MCF 10A (cell line): ENCODE measurements at regions of chr1 and their contacts with region 1.

Region 1: GRCh38 chr1:233025157-233025915 is 74.9 kb downstream of the NTPCR start:
- DNase-seq: peak; percentile 46
- H3K4me3 Mint-ChIP-seq: no peak overlapping the region
- H3K27ac Mint-ChIP-seq: no peak overlapping the region
- H3K4me1 Mint-ChIP-seq: no peaks in the 10 kb centered on the region
- H3K27me3 Mint-ChIP-seq: no peaks in the 10 kb centered on the region
- CTCF ChIP-seq: peak; percentile 27

Region 2: GRCh38 chr1:232940262-232940661 is 85.1 kb before region 1 on chr1:
- CTCF ChIA-PET with region 1: no interaction called
- POLR2A ChIA-PET with region 1: no interaction called
- intact Hi-C with region 1: no loop called
- DNase-seq: no peak
- H3K4me3 Mint-ChIP-seq: no peak overlapping the region
- H3K27ac Mint-ChIP-seq: no peak overlapping the region
- H3K4me1 Mint-ChIP-seq: peaks cover 12% of the 10 kb centered on the region
- H3K27me3 Mint-ChIP-seq: no peaks in the 10 kb centered on the region
- CTCF ChIP-seq: no peak

Region 3: GRCh38 chr1:233012021-233012420 is 13.3 kb before region 1 on chr1:
- CTCF ChIA-PET with region 1: interaction called, 14 read pairs
- POLR2A ChIA-PET with region 1: interaction called, 6 read pairs
- intact Hi-C with region 1: no loop called
- DNase-seq: no peak
- H3K4me3 Mint-ChIP-seq: no peak overlapping the region
- H3K27ac Mint-ChIP-seq: no peak overlapping the region
- H3K4me1 Mint-ChIP-seq: no peaks in the 10 kb centered on the region
- H3K27me3 Mint-ChIP-seq: no peaks in the 10 kb centered on the region
- CTCF ChIP-seq: no peak